HEK293 (cell line): ENCODE measurements at regions of chr6 and their contacts with region 1.

Region 1: DNA sequence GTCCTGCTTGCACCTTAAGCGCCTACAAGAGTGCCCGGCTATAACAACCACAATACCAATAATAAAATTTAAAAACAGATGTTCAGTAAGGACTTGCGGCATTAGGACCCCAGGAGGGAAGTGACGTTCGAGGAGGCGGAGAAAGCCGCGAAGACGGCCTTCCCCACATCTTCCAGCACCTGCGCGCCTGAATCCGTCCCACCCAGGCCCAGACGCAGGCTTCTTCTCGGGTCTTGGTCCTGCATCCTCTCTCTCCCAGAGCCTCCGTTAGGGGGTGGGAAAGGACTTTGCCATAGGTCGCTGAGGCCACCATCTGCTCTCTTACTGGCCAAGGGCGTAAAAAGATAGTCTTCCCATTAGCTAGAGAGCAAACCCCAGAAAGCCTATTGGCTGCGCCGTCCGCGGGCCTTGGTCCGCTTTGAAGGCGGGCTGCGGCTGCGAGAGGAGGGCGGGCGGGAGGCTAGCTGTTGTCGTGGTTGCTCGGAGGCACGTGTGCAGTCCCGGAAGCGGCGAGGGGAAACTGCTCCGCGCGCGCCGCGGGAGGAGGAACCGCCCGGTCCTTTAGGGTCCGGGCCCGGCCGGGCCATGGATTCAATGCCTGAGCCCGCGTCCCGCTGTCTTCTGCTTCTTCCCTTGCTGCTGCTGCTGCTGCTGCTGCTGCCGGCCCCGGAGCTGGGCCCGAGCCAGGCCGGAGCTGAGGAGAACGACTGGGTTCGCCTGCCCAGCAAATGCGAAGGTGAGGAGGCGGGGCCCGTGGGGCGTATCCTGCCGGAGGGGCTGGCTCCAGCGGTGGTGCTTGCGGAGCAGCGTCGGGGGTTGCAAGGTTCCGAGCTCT is at the start of gene CNPY3:
- H3K4me3 ChIP-seq: peak within 1 kb of the TSS; percentile 66
- H3K27ac ChIP-seq: peak within 1 kb of the TSS; percentile 85
- H3K4me1 ChIP-seq: peaks cover 3% of the 10 kb centered on the region; the same call in 1 of the 2 replicates
- CTCF ChIP-seq: peak; percentile 17; the same call in 1 of the 2 replicates

Region 2: GRCh38 chr6:42782622-42783176 is 146.5 kb before region 1 on chr6:
- CTCF ChIA-PET with region 1: no interaction called
- POLR2A ChIA-PET with region 1: interaction called, 13 read pairs
- H3K4me3 ChIP-seq: peak overlapping the region; percentile 98
- H3K27ac ChIP-seq: peak overlapping the region; percentile 100
- H3K4me1 ChIP-seq: peaks cover 10% of the 10 kb centered on the region; the same call in 1 of the 2 replicates
- CTCF ChIP-seq: no peak

Region 3: GRCh38 chr6:42890311-42891198 is 38.6 kb before region 1 on chr6:
- CTCF ChIA-PET with region 1: interaction called, 3 read pairs
- POLR2A ChIA-PET with region 1: interaction called, 17 read pairs
- H3K4me3 ChIP-seq: peak overlapping the region; percentile 66
- H3K27ac ChIP-seq: peak overlapping the region; percentile 94
- H3K4me1 ChIP-seq: no peaks in the 10 kb centered on the region
- CTCF ChIP-seq: peak; percentile 51; the same call in 1 of the 2 replicates

Region 4: DNA sequence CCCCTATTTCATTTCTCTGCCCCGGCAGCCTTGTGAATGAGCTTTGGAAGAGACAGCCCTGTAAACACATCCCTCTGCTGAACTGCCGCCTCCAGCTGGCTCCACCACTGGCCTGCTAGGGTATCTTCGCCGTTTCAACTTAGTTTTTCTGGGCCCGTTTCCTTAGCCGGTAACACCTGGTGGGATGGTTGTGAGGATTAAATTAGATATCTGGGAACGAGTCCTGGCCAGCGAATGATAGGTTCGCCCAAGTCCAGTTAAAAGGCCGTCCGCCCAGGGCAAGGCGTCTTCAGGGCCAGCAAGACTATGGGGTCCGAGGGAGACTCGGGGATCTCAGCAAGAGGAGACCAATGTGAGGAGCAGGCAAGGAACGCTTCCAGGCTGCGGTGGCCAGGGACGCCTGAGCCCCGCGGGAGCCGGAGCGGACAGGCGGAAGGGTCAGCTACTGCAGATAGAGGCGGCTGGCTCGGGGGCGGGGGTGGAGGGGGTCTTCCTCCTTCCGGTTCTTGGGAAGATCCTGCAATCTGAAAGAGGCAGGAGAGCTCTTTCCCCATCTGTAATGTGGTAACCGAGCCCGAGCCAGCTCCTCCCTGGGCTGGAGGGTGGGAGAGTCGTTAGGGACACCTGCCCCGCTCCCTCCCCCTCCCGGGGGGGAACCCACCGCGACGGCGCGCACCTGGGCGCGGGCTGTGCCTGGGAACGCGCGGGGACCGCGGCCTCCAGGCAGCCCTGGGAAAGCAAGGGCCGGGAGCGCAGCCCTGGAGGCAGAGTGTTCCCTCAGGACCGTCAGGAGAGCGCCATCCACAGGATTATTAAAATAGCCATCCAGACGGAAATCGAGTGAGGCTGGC is 17.8 kb before region 1 on chr6:
- CTCF ChIA-PET with region 1: interaction called, 8 read pairs
- POLR2A ChIA-PET with region 1: interaction called, 27 read pairs
- H3K4me3 ChIP-seq: no peak overlapping the region
- H3K27ac ChIP-seq: no peak overlapping the region
- H3K4me1 ChIP-seq: no peaks in the 10 kb centered on the region
- CTCF ChIP-seq: no peak

Region 5: DNA sequence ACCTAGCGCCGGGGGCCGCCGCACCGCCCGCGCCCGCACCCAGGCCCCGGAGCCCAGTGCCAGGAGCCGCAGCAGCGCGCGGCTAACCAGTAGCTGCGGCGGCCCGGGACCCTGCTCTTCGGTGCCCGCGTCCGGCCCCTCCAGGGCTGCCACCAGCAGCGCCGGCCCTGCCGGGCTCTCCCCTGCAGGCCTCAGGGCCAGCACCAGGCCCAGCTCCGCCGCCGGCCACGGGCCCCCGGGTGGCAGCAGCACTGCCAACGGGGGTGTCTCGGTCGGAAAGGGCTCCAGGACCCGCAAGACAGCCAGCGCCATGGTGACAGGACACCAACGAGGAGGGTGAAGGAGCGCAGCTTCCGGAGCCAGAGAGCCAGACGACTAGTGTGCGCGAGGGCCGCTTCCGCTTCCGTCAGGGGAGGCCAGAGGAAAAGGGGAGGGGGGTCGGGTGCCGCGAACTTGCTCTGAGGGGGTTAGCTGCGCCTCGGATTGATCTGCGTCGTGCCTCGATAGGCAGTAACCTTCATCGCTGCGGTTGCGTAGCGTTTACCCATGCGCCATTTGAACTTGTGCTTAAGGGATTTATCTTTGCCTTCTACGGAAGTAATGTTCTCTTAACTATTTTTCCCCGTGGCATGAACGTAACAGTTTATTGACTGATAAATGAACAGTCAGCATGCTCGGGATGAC is 49.8 kb after region 1 on chr6 and contains the start of gene PEX6:
- CTCF ChIA-PET with region 1: interaction called, 3 read pairs
- POLR2A ChIA-PET with region 1: interaction called, 48 read pairs
- H3K4me3 ChIP-seq: peak within 1 kb of the TSS; percentile 88
- H3K27ac ChIP-seq: peak within 1 kb of the TSS; percentile 84
- H3K4me1 ChIP-seq: no peaks in the 10 kb centered on the region
- CTCF ChIP-seq: no peak

Region 6: DNA sequence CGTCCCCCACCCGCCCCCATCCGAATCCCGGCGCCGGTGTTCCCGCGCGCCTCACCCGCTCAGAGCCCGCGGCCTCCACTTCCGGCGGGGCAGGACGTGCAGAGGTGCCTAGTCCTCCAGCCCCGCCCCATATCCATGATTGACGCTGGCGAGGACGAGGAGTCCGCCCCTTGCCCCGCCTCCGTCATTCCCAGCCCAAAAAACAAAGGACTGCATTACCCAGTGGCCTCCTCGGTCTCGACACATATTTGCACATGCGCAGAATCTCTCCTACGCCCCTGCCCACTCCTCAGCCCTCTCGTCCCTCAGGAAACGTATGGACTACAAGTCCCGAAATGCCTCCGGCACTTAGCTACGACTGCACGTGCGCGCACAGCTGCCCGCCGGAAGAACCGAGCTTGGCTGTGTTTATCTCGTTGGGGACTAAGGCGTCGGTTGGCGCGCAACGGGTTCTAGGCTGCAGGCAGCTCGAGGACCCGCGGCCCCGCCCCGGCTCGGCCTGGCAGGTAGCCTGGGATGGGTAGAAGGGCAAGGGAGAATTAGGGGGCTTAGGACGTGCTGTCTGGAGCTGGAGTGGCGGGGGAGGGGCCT is 84.7 kb after region 1 on chr6 and contains the starts of genes KLHDC3 and MEA1:
- CTCF ChIA-PET with region 1: no interaction called
- POLR2A ChIA-PET with region 1: interaction called, 35 read pairs
- H3K4me3 ChIP-seq: peak within 1 kb of the TSS; percentile 70
- H3K27ac ChIP-seq: peak within 1 kb of the TSS; percentile 76
- H3K4me1 ChIP-seq: peaks cover 12% of the 10 kb centered on the region
- CTCF ChIP-seq: no peak

Region 7: GRCh38 chr6:43053545-43054205 is 124.5 kb after region 1 on chr6 and contains the start of gene CUL7:
- CTCF ChIA-PET with region 1: no interaction called
- POLR2A ChIA-PET with region 1: interaction called, 20 read pairs
- H3K4me3 ChIP-seq: peak within 1 kb of the TSS; percentile 74
- H3K27ac ChIP-seq: peak within 1 kb of the TSS; percentile 85
- H3K4me1 ChIP-seq: peaks cover 9% of the 10 kb centered on the region
- CTCF ChIP-seq: peak; percentile 77; the same call in 1 of the 2 replicates